HEK293 (cell line): ENCODE measurements at regions of chr5 and their contacts with region 1.

Region 1: GRCh38 chr5:91383027-91383955 is at the start of gene ARRDC3:
- H3K4me3 ChIP-seq: peak within 1 kb of the TSS; percentile 72
- H3K27ac ChIP-seq: peak within 1 kb of the TSS; percentile 71
- H3K4me1 ChIP-seq: peaks cover 6% of the 10 kb centered on the region; the same call in 1 of the 2 replicates
- CTCF ChIP-seq: peak; percentile 38; the same call in 1 of the 2 replicates

Region 2: DNA sequence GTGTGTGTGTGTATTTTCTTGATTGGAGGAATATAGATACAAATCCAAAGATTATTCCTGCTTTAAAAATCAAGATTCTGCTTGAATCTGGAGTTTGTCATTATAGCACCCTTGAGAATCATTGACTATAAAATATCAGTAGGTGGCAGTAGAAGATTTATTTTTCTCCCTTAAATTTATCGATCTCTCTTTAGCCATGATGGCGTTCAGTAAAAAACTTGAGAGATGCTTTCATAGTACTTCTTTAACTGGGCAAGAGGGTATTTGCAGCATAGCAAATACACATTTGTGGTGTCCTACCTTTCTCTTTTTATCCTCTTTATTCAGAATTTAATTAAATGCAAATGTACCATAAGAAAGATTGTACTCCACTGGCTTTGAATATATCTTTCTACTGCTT is 517.0 kb before region 1 on chr5:
- CTCF ChIA-PET with region 1: interaction called, 50 read pairs
- POLR2A ChIA-PET with region 1: interaction called, 3 read pairs
- H3K4me3 ChIP-seq: no peak overlapping the region
- H3K27ac ChIP-seq: no peak overlapping the region
- H3K4me1 ChIP-seq: no peaks in the 10 kb centered on the region
- CTCF ChIP-seq: no peak; the same call in 1 of the 2 replicates

Region 3: DNA sequence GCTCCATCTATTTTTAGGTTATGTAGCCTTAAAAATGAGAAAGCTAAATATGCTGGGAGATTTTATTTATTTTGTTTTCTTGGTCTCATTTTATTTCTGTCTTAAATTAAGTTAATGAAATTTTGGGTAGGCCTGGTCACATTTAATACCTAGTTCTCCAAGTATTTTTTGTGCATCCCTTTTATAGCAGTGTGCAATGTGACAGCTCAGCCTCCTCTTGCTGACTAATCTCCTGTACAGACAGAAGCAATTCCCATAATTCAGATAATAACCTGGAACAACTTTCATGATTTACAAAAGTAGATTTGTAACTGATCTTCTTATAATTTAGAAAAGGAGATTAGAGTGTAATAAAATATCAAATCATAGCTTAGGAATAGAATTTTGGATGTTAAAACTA is 420.8 kb before region 1 on chr5:
- CTCF ChIA-PET with region 1: no interaction called
- POLR2A ChIA-PET with region 1: no interaction called
- H3K4me3 ChIP-seq: no peak overlapping the region
- H3K27ac ChIP-seq: no peak overlapping the region
- H3K4me1 ChIP-seq: no peaks in the 10 kb centered on the region
- CTCF ChIP-seq: no peak

Region 4: GRCh38 chr5:90983148-90983547 is 400.1 kb before region 1 on chr5:
- CTCF ChIA-PET with region 1: interaction called, 4 read pairs
- POLR2A ChIA-PET with region 1: interaction called, 11 read pairs
- H3K4me3 ChIP-seq: no peak overlapping the region
- H3K27ac ChIP-seq: no peak overlapping the region
- H3K4me1 ChIP-seq: peaks cover 10% of the 10 kb centered on the region
- CTCF ChIP-seq: no peak

Region 5: GRCh38 chr5:91219803-91220371 is 163.4 kb before region 1 on chr5:
- CTCF ChIA-PET with region 1: interaction called, 56 read pairs
- POLR2A ChIA-PET with region 1: interaction called, 8 read pairs
- H3K4me3 ChIP-seq: no peak overlapping the region
- H3K27ac ChIP-seq: peak overlapping the region; percentile 55
- H3K4me1 ChIP-seq: peaks cover 6% of the 10 kb centered on the region; the same call in 1 of the 2 replicates
- CTCF ChIP-seq: no peak

Region 6: GRCh38 chr5:91307048-91307447 is 76.2 kb before region 1 on chr5:
- CTCF ChIA-PET with region 1: interaction called, 11 read pairs
- POLR2A ChIA-PET with region 1: interaction called, 4 read pairs
- H3K4me3 ChIP-seq: no peak overlapping the region
- H3K27ac ChIP-seq: no peak overlapping the region
- H3K4me1 ChIP-seq: no peaks in the 10 kb centered on the region
- CTCF ChIP-seq: no peak

Region 7: DNA sequence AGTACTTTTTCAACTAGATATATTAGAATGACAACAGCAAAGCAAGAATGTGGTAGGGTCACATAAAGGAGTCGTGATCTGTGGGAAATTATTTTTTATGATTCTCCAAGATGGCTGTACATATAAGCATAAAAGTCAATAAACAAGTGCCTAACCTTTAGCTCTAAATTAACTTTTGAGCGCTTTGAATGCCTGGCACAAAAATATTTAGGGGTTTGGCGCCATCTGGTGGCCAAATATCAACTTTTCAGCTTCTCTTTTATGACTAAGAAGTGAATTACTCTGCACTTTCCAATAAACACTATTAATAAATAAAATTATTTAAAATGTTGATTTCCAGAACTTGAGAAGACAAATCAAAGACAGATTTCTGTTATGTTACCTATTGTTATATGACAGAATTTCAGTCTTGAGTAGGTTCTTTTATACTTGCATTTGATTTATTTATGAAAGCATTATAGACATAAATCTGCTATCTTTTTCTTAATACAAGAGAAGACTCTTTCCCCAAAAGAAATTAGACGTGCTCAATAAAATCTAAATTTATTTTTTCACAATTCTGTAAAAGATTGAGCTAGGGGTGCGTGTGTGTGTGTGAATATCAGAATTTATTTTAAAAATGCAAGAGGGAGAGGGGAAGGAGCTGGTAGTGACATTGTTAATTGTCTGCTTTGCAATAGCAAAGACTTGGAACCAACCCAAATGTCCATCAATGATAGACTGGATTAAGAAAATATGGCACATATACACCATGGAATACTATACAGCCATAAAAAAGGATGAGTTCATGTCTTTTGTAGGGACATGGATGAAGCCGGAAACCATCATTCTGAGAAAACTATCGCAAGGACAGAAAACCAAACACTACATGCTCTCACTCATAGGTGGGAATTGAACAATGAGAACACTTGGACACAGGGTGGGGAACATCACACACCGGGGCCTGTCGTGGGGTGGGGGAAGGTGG is 36.6 kb after region 1 on chr5:
- CTCF ChIA-PET with region 1: interaction called, 98 read pairs
- POLR2A ChIA-PET with region 1: interaction called, 13 read pairs
- H3K4me3 ChIP-seq: no peak overlapping the region
- H3K27ac ChIP-seq: no peak overlapping the region
- H3K4me1 ChIP-seq: peaks cover 3% of the 10 kb centered on the region
- CTCF ChIP-seq: no peak

Region 8: DNA sequence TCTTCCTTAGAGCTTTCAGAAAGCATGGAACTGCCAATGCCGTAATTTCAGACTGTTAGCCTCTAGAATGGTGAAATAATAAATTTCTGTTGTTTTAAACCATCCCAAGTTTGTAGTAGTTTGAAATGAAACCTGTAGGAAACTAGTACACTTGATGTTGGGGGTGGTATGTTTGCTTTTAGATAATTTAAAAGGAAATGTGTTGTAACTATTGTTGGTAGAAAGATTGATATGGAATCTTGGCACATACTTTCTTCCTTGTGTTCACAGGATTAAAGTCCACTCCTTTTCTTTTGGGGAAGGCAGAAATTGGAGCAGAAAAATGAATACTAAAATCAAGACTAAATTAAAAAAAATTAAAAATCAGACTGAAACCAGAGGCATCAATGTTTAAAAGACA is 65.8 kb after region 1 on chr5:
- CTCF ChIA-PET with region 1: no interaction called
- POLR2A ChIA-PET with region 1: no interaction called
- H3K4me3 ChIP-seq: no peak overlapping the region
- H3K27ac ChIP-seq: no peak overlapping the region
- H3K4me1 ChIP-seq: no peaks in the 10 kb centered on the region
- CTCF ChIP-seq: no peak

Region 9: GRCh38 chr5:91514400-91514799 is 131.1 kb after region 1 on chr5:
- CTCF ChIA-PET with region 1: no interaction called
- POLR2A ChIA-PET with region 1: no interaction called
- H3K4me3 ChIP-seq: no peak overlapping the region
- H3K27ac ChIP-seq: no peak overlapping the region
- H3K4me1 ChIP-seq: no peaks in the 10 kb centered on the region
- CTCF ChIP-seq: no peak